ENCODE measurements at regions of chr22 and their contacts with region 1.

Region 1: DNA sequence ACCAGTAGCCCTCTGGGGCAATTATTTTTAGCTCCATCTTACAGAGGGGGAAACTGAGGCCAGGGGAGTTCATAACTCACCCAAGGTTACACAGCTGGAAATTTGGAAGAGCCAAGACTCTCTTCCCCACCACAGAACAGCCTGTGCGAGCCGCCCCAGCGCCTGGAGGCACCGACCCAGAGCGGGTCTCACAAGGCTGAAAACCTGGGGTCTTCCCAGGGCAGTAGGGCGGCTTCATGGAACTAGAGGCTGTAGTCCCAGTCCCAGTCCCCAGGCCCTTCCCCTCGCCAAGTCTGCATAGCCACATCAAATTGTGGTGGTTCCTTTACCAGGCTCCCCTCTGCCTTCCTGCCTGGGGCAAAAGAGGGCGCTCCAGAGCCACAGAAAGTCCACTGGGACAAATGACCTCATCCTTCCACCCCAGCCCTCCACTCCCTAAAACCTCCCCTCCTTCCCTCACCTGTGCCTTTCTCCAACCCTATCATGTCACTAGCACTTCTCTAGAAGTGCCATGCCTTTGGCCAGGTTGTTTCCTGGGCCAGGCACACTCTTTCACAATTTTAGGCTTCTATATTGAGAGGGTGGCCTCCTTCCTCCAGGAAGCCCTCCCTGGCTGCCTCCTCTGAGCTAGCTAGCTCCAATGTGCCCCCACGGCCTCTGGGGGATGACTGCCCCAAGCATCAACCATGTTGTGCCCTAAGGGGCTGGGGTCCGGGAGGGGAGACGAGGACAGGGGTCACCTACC is 15.2 kb upstream of the CDC42EP1 start:
- DNase-seq: peak; percentile 83
- H3K4me3 ChIP-seq: peak overlapping the region in 3 of 4 donors; percentile 21 to 34 (median 27)
- H3K27ac ChIP-seq: peak overlapping the region; percentile 87 to 94 (median 88)
- H3K4me1 ChIP-seq: peaks cover 0 to 40% (median 35%) of the 10 kb centered on the region in 4 donors
- H3K27me3 ChIP-seq: no peaks in the 10 kb centered on the region
- CTCF ChIP-seq: peak; percentile 59 to 71 (median 63)
- EP300 ChIP-seq: no peak
- POLR2A ChIP-seq: no peak

Region 2: GRCh38 chr22:37561212-37562048 is 16.3 kb after region 1 on chr22:
- intact Hi-C with region 1: loop called (anchors 1 kb)
- DNase-seq: peak; percentile 97
- H3K4me3 ChIP-seq: peak overlapping the region; percentile 68 to 92 (median 74)
- H3K27ac ChIP-seq: peak overlapping the region; percentile 94 to 99 (median 96)
- H3K4me1 ChIP-seq: peaks cover 0 to 64% (median 60%) of the 10 kb centered on the region in 4 donors
- H3K27me3 ChIP-seq: peaks cover 0 to 6% (median 0%) of the 10 kb centered on the region in 3 donors
- CTCF ChIP-seq: peak; percentile 70 to 84 (median 74)
- EP300 ChIP-seq: no peak
- POLR2A ChIP-seq: no peak

Region 3: DNA sequence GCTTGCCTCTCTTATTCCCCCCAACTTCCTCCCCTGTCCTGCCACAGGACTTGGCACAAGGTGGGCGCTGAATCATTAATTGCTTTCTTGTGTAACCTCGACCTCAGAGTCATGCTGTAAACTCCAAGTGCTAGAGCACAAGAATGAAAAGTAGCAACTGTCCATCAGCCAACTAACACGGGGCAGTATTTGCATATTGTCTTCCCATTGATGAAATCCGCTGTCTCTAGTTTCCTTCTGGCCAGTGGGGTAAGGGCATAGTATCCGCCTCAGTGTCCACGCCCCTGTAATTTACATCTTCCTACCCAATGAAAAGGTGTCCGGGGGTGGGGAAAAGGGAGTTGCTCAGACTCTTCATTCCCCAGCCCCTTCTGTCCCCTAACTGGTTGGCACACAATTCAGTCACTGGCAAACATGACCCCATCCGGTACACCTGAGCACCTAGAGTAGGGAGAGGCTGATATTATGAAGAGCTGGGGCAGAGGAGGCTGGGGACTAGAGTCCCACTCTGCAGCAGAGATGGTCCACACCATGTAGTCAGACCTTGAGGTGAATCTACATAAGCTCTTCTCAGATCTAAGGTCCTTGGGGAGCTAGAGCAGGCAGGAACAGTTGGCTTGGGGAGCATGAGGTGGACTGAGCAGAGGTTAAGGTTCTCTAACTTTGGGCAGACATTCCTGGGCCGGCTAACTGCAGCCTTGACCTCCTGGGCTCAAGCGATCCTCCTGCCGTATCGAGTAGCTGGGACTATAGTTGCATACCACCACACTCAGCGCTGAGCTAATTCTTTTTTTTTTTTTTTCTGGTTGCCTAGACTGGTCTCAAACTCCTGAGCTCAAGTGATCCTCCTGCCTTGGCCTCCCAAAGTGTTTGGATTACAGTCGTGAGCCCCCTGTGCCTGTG is 56.7 kb after region 1 on chr22:
- intact Hi-C with region 1: no loop called
- DNase-seq: no peak
- H3K4me3 ChIP-seq: no peak overlapping the region
- H3K27ac ChIP-seq: no peak overlapping the region
- H3K4me1 ChIP-seq: peaks cover 0 to 1% (median under 1%) of the 10 kb centered on the region in 4 donors
- H3K27me3 ChIP-seq: peaks cover 0 to 26% (median 0%) of the 10 kb centered on the region in 3 donors
- CTCF ChIP-seq: no peak
- EP300 ChIP-seq: no peak
- POLR2A ChIP-seq: no peak